ENCODE measurements at regions of chrX and their contacts with region 1.

Region 1: GRCh38 chrX:141405842-141406492 is 163.7 kb upstream of the SPANXC start:
- DNase-seq: peak; percentile 38 to 77
- H3K4me3 ChIP-seq: no peak overlapping the region
- H3K27ac ChIP-seq: peak overlapping the region; percentile 80
- H3K4me1 ChIP-seq: peaks cover 12% of the 10 kb centered on the region; the same call in 1 of the 2 replicates
- H3K27me3 ChIP-seq: no peaks in the 10 kb centered on the region
- CTCF ChIP-seq: no peak

Region 2: DNA sequence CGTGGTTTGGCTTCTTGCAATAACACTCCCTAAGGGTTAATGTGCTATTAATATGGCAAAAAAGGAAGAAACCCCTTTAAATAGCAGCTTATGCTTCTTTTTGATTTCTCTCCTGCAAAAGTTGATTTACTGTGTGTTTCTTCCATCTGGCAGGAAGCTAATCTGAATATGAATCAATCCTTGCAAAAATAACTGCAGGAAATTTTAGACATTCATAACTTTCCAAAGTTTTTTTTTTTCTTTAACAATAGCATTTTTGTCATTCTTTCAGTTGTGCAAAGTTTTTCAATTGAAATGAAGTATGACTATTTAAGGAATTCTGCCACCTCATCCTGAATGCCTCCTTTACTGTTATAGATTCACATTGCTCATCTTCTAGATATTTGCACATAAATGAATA is 63.0 kb after region 1 on chrX:
- CTCF ChIA-PET with region 1: interaction called, 4 read pairs
- POLR2A ChIA-PET with region 1: no interaction called
- intact Hi-C with region 1: loop called (anchors 2 kb)
- DNase-seq: peak in 1 of 2 experiments; percentile 40
- H3K4me3 ChIP-seq: no peak overlapping the region
- H3K27ac ChIP-seq: no peak overlapping the region
- H3K4me1 ChIP-seq: no peaks in the 10 kb centered on the region
- H3K27me3 ChIP-seq: no peaks in the 10 kb centered on the region
- CTCF ChIP-seq: no peak

Measured in PC-9 (cell line).